Left cardiac atrium (tissue), 4 donors: ENCODE measurements at regions of chr5 and their contacts with region 1.

Region 1: DNA sequence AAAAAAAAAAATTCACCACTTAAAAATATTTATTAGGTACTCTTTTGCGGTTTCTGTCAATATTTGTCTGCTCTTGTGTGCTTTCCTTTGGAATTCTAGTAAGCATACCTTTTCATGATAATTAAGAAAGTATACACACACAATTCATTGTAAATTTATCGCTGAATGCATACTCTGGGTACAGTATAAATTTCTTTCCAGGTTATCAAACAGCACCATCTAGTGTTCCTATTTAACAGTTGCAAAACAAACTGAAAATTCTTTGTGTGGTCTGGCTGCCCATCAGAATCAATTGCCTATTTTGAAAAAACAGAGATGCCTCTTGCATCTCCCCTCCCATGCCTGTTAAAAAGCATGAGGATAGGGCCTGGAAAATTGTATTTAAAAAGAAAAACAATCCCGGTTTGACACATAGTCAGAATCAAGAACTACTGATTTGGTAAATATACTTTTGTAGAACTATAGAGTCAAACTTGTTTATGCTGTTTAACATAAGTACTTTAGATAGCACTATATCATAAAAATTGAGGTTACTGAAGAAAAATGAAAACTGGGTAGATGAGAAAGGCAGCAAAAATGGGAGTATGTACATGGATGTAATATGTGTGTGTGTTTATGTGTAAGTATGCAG is 16.2 kb downstream of the PGGT1B start:
- DNase-seq: no peak
- ATAC-seq: peak in 1 of 2 donors; percentile 38

Region 2: DNA sequence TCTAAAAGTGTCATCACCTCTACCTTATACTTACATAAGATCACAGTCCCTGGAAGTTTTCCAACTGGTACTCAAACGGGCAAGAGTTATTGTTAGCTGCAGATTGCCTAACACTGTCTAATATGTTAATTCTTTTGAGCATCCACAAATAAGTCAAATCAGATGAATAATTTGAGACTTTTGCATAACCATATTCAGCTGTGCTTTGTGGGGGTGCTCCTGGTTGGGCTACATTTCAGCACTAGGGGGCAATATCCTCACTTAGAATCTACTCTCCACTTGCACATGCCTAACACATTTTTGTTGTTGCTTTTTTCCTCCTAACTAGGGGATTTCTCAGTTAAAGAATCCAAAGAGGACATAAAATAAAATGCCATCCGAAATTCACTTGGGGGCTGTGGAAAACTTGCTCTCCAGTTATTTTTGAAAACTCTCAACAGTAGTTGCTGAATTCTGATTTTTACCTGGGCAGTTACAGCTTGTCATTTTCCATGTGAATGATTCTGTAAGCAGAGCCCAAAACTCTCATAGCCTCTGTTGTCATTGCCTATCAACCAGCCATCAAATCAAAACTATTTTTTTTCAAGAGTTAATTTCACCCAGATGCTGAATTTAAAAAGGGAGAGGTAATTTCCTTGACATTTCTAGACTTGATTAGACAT is 148.3 kb before region 1 on chr5:
- intact Hi-C with region 1: loop called in 1 of 2 experiments (anchors 5 kb)
- DNase-seq: no peak
- ATAC-seq: peak in 1 of 2 donors; percentile 63

Region 3: GRCh38 chr5:115147052-115147451 is 99.4 kb before region 1 on chr5:
- intact Hi-C with region 1: no loop called
- DNase-seq: no peak
- ATAC-seq: no peak